Right cardiac atrium (tissue), 5 donors: ENCODE measurements at regions of chr17 and their contacts with region 1.

Region 1: DNA sequence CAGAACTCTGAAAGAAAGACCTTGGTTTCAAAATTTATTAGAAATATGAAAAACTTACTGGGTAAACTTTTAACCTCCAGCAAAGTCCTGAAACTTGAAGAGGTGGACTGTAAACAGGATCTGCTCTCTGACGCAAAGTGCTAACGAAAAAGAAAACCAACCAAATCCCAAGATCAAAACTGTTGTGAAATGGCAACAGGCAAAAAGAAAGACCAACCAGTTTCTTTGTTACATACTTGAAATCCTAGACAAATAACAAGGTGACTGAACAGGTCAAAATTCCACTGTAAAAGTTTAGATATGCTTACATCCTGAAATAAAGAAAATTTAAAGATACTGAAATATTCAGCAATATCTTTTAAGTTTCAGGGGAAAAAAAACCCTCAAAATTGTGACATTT is 44.2 kb downstream of the TRIM37 start:
- DNase-seq: no peak
- ATAC-seq: no peak
- H3K4me3 ChIP-seq: no peak overlapping the region
- H3K27ac ChIP-seq: no peak overlapping the region
- H3K4me1 ChIP-seq: no peaks in the 10 kb centered on the region
- H3K27me3 ChIP-seq: no peaks in the 10 kb centered on the region

Region 2: DNA sequence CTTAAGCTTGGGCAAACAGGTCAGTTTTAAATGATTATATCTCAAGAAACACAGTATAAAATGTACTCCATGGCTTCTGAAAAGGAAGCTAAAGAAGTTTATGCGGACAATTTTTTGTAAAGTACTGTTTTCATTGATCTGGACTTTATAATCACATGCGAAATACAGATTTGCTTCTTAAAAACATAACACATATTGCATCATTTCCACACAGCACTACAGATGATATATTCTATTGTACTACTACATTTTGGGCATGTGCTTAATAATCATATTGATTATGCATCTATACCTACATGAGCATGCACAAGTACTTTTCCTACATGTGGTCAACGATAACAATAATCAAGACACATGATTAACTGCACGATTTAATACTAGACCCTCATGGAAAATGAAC is 21.6 kb after region 1 on chr17:
- intact Hi-C with region 1: loop called in 1 of 4 experiments (anchors 2 kb)
- DNase-seq: no peak
- ATAC-seq: no peak
- H3K4me3 ChIP-seq: no peak overlapping the region
- H3K27ac ChIP-seq: no peak overlapping the region
- H3K4me1 ChIP-seq: no peaks in the 10 kb centered on the region
- H3K27me3 ChIP-seq: no peaks in the 10 kb centered on the region

Region 3: GRCh38 chr17:59094301-59094700 is 31.8 kb after region 1 on chr17:
- intact Hi-C with region 1: no loop called
- DNase-seq: no peak
- ATAC-seq: no peak
- H3K4me3 ChIP-seq: no peak overlapping the region
- H3K27ac ChIP-seq: no peak overlapping the region
- H3K4me1 ChIP-seq: peaks cover 3% of the 10 kb centered on the region
- H3K27me3 ChIP-seq: no peaks in the 10 kb centered on the region